ENCODE measurements at regions of chr22 and their contacts with region 1.

Region 1: GRCh38 chr22:37849089-37849751 is at the start of gene EIF3L:
- DNase-seq: peak; percentile 91 to 92
- H3K4me3 ChIP-seq: peak within 1 kb of the TSS; percentile 89
- H3K27ac ChIP-seq: peak within 1 kb of the TSS; percentile 94
- H3K4me1 ChIP-seq: peaks cover 21% of the 10 kb centered on the region
- H3K27me3 ChIP-seq: no peaks in the 10 kb centered on the region
- CTCF ChIP-seq: no peak
- total RNA-seq, gene EIF3L: 566 and 582 TPM in 2 replicates

Region 2: GRCh38 chr22:37910890-37911743 is 61.9 kb after region 1 on chr22:
- CTCF ChIA-PET with region 1: no interaction called
- POLR2A ChIA-PET with region 1: interaction called, 13 read pairs
- intact Hi-C with region 1: no loop called
- DNase-seq: no peak
- H3K4me3 ChIP-seq: no peak overlapping the region
- H3K27ac ChIP-seq: no peak overlapping the region
- H3K4me1 ChIP-seq: peaks cover 15% of the 10 kb centered on the region
- H3K27me3 ChIP-seq: no peaks in the 10 kb centered on the region
- CTCF ChIP-seq: no peak